ENCODE measurements at regions of chr17 and their contacts with region 1.

Region 1: GRCh38 chr17:33674685-33675084 is 381.6 kb upstream of the ASIC2 start:
- DNase-seq: peak; percentile 62
- H3K4me3 Mint-ChIP-seq: no peak overlapping the region
- H3K27ac Mint-ChIP-seq: no peak overlapping the region
- H3K4me1 Mint-ChIP-seq: no peaks in the 10 kb centered on the region
- H3K27me3 Mint-ChIP-seq: peaks cover 12% of the 10 kb centered on the region

Region 2: GRCh38 chr17:33520426-33521330 is 154.0 kb before region 1 on chr17:
- CTCF ChIA-PET with region 1: interaction called, 19 read pairs
- POLR2A ChIA-PET with region 1: no interaction called
- DNase-seq: peak; percentile 39
- H3K4me3 Mint-ChIP-seq: no peak overlapping the region
- H3K27ac Mint-ChIP-seq: no peak overlapping the region
- H3K4me1 Mint-ChIP-seq: no peaks in the 10 kb centered on the region
- H3K27me3 Mint-ChIP-seq: peaks cover 2% of the 10 kb centered on the region

Region 3: GRCh38 chr17:33686171-33686570 is 11.5 kb after region 1 on chr17:
- CTCF ChIA-PET with region 1: interaction called, 13 read pairs
- POLR2A ChIA-PET with region 1: no interaction called
- DNase-seq: peak; percentile 31
- H3K4me3 Mint-ChIP-seq: no peak overlapping the region
- H3K27ac Mint-ChIP-seq: no peak overlapping the region
- H3K4me1 Mint-ChIP-seq: no peaks in the 10 kb centered on the region
- H3K27me3 Mint-ChIP-seq: no peaks in the 10 kb centered on the region

Region 4: DNA sequence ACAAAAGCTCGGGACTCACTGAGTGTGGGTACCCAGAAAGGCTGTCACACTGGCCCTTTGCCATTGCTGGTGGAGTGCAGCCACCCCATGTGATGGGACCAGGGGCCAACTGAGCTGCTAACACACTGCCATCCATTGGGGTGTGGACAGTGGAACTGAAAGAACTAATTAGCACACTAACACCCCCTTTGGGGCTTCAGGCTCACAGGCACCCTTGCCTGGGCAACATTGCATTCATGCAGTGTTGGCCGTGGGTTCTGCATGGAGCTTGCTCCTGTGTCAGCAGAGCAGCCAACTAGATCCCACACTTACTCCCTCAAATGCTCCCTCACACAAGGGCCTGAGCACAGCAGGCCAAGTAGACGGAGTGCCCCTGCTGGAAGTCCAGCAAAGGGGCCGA is 94.4 kb after region 1 on chr17:
- CTCF ChIA-PET with region 1: no interaction called
- POLR2A ChIA-PET with region 1: no interaction called
- DNase-seq: no peak
- H3K4me3 Mint-ChIP-seq: no peak overlapping the region
- H3K27ac Mint-ChIP-seq: no peak overlapping the region
- H3K4me1 Mint-ChIP-seq: no peaks in the 10 kb centered on the region
- H3K27me3 Mint-ChIP-seq: no peaks in the 10 kb centered on the region

Region 5: GRCh38 chr17:33816842-33817617 is 142.3 kb after region 1 on chr17:
- CTCF ChIA-PET with region 1: no interaction called
- POLR2A ChIA-PET with region 1: no interaction called
- DNase-seq: no peak
- H3K4me3 Mint-ChIP-seq: no peak overlapping the region
- H3K27ac Mint-ChIP-seq: no peak overlapping the region
- H3K4me1 Mint-ChIP-seq: no peaks in the 10 kb centered on the region
- H3K27me3 Mint-ChIP-seq: no peaks in the 10 kb centered on the region